PC-3 (cell line): ENCODE measurements at regions of chr11 and their contacts with region 1.

Region 1: DNA sequence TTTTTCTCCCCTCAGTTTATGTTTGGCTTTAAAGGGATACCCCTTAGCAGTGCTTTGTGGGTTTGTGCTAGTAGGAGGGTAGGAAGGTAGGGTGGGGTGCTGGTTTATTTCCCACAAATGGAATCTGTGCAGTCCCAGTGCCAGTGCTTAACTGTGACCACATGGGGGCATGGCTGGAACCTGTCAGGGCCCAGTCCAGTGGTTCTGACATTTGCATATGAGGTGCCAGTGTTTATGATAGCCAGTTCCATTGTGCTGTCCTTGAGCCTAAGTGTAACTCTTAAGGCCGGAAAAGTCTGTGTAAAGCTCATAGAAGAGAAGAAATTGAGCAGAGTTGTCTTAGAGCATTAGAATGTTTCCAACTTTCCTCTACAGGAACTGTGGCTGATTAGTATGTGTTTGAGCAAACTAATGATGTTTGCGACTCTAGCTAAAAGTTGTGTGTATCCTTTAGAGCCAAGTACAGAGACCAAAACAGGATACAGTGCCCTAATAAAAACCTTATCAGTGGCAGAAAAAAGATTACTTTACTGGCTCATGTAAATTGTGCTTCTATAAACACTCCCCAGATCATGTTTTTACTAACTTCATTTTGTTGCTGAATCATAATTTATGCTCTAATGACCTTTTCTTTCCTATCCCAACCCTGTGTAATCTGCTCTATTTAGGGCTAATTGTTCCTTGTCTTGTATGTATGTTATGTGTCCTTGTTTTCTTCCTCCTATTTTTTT is 38.1 kb downstream of the DIXDC1 start:
- DNase-seq: peak; percentile 25
- ATAC-seq: peak; percentile 33
- H3K4me3 ChIP-seq: no peak overlapping the region
- H3K27ac ChIP-seq: no peak overlapping the region
- H3K4me1 ChIP-seq: peaks cover 10% of the 10 kb centered on the region
- H3K27me3 ChIP-seq: no peaks in the 10 kb centered on the region
- CTCF ChIP-seq: peak; percentile 61

Region 2: DNA sequence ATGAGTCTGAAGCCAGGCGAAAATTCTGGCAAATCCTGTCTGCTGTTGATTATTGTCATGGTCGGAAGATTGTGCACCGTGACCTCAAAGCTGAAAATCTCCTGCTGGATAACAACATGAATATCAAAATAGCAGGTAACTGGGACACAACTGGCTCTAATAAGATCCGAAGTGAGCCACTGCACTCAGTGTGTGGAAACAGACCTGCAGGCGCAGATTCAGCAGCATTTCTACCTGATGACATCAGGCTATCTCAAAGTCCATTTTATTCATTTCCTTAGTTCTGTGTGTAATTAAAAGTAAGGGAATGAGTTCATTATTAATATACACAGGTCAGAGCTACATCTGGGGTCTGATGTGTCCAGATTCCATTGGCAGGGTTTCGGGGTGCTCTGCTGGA is 287.2 kb before region 1 on chr11:
- CTCF ChIA-PET with region 1: no interaction called
- POLR2A ChIA-PET with region 1: no interaction called
- intact Hi-C with region 1: no loop called
- DNase-seq: no peak
- ATAC-seq: no peak
- H3K4me3 ChIP-seq: no peak overlapping the region
- H3K27ac ChIP-seq: no peak overlapping the region
- H3K4me1 ChIP-seq: no peaks in the 10 kb centered on the region
- H3K27me3 ChIP-seq: no peaks in the 10 kb centered on the region
- CTCF ChIP-seq: no peak

Region 3: DNA sequence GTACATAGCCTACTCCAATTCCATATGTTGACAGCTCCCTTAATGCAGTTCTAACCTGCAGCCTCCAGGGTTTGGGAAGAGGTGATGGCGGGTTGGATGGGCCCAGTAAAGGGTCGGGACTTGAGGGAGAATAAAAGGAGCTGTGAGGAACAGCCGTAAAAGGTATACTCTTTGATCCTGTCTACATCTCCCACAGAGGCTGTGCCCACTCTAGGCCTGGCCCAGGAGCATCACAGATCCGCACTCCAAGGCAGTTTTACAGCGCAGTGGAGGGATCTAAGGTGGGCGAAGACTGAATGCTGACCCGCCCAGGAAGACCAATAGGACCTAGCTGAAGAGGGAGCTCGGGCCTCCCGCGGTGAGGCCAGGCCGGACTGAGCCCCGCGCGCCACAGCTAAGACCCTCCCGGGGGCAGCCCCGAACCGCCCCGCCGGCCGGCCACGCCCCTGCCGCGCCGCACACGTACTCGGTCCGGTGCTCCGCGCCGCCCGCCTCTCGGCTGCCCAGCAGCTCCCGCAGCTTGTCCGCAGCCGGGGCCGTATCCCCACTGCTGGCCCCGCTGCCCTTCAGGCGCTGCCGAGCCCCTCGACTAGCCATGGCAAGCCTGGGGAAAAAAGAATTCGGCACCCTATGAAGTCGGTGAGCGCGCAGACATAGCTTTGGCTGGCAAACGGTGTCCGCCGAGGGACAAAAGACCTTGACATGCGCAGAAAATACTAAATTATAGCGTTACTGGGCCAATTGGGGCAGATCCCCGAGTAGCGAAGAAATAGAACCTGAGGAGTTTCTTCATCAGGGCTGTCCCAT is 104.2 kb before region 1 on chr11 and contains the start of gene ALG9:
- CTCF ChIA-PET with region 1: interaction called, 13 read pairs
- POLR2A ChIA-PET with region 1: no interaction called
- intact Hi-C with region 1: no loop called
- DNase-seq: peak; percentile 83
- ATAC-seq: peak; percentile 91
- H3K4me3 ChIP-seq: peak within 1 kb of the TSS; percentile 91
- H3K27ac ChIP-seq: peak within 1 kb of the TSS; percentile 51
- H3K4me1 ChIP-seq: peaks cover 17% of the 10 kb centered on the region
- H3K27me3 ChIP-seq: no peaks in the 10 kb centered on the region
- CTCF ChIP-seq: peak; percentile 61
- total RNA-seq, gene ALG9: 29.4 and 34.3 TPM in 2 replicates

Region 4: DNA sequence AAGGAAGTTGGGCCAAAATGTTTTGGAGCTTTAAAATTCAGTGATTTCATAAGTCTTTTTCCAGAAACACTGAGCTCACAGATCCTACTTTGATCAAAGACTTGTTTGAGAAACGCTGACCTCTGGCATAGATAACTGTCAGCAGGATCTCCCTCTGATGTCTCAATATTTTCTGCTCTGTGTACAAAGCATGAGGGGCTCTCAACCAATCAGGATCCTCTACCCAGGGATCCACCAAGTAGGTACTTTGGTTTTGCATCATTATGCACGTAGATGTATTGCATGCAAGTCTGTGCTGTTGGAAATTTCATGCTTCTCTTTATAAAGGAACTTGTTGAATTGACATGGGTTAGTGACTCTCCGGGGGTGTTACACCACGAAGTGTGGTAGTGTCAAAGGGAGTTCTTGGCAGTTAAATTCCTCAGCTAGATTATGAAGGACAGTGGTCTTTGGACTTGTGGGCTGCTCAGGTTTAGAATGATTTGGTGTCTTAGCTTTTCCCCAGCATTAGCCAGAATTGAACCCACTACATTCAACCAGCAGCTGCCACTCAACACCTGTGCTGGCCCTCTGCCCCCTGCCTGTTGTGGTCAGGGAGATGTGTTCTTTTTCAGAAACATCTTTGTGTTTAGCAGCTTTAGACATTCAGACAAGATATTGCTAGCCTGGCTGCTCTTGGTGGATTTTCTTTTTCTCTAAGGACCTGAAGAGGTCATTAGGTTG is 39.8 kb before region 1 on chr11:
- CTCF ChIA-PET with region 1: interaction called, 12 read pairs
- POLR2A ChIA-PET with region 1: interaction called, 3 read pairs
- intact Hi-C with region 1: no loop called
- DNase-seq: no peak
- ATAC-seq: no peak
- H3K4me3 ChIP-seq: no peak overlapping the region
- H3K27ac ChIP-seq: no peak overlapping the region
- H3K4me1 ChIP-seq: peaks cover 30% of the 10 kb centered on the region
- H3K27me3 ChIP-seq: no peaks in the 10 kb centered on the region
- CTCF ChIP-seq: no peak